HCT116 (cell line): ENCODE measurements at regions of chr5 and their contacts with region 1.

Region 1: DNA sequence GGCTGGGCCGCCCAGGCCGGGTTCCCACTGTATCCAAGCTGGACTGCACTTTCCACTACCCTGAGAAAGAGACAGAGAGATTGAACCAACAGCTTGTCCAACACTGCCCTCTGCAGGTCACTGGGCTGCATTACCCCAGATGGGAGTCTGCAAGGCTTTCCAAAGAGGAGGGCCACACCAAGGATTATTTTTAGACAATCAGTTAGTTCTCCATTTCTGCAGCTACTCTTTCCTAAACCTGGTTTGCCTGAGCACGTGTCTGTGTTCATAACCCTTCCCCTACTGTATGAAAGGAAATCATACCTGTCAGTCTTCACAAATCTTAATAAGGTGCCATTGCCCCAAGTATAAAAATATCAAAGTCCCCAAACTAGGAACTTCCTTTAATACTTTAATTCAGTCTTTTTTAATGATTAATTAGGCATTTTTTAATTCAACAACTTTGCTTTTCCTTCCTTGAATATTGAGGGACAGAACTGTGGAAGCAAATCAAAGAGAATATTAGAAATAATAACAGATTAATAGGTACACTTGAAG is 13.4 kb upstream of the FGF1 start:
- DNase-seq: peak; percentile 66
- ATAC-seq: peak; percentile 98
- H3K4me3 ChIP-seq: no peak overlapping the region
- H3K27ac ChIP-seq: no peak overlapping the region
- H3K4me1 ChIP-seq: peaks cover 11 to 14% of the 10 kb centered on the region in 2 experiments; a peak in 3 of 4 replicates
- H3K27me3 ChIP-seq: no peaks in the 10 kb centered on the region
- CTCF ChIP-seq: peak; percentile 94 to 97 (median 97)
- POLR2A ChIP-seq: no peak
- RAD21 ChIP-seq: peak; percentile 100

Region 2: GRCh38 chr5:142167458-142167857 is 531.8 kb before region 1 on chr5:
- CTCF ChIA-PET with region 1: no interaction called
- POLR2A ChIA-PET with region 1: no interaction called
- RAD21 ChIA-PET with region 1: interaction called in 1 of 2 experiments, 3 read pairs
- intact Hi-C with region 1: loop called (anchors 5 kb)
- DNase-seq: no peak
- ATAC-seq: peak; percentile 71
- H3K4me3 ChIP-seq: no peak overlapping the region
- H3K27ac ChIP-seq: no peak overlapping the region
- H3K4me1 ChIP-seq: peaks cover 3 to 31% of the 10 kb centered on the region in 2 experiments; a peak in 3 of 4 replicates
- H3K27me3 ChIP-seq: no peaks in the 10 kb centered on the region
- CTCF ChIP-seq: peak; percentile 42 to 55 (median 45); a peak in 5 of 6 replicates
- POLR2A ChIP-seq: no peak
- RAD21 ChIP-seq: peak; percentile 73

Region 3: GRCh38 chr5:142587354-142587965 is 111.8 kb before region 1 on chr5:
- CTCF ChIA-PET with region 1: interaction called, 7 read pairs
- POLR2A ChIA-PET with region 1: no interaction called
- RAD21 ChIA-PET with region 1: no interaction called
- intact Hi-C with region 1: loop called (anchors 1 kb)
- DNase-seq: peak; percentile 12
- ATAC-seq: peak; percentile 75
- H3K4me3 ChIP-seq: no peak overlapping the region
- H3K27ac ChIP-seq: no peak overlapping the region
- H3K4me1 ChIP-seq: no peaks in the 10 kb centered on the region
- H3K27me3 ChIP-seq: no peaks in the 10 kb centered on the region
- CTCF ChIP-seq: peak; percentile 54 to 83 (median 67); a peak in 5 of 6 replicates
- POLR2A ChIP-seq: no peak
- RAD21 ChIP-seq: peak; percentile 66

Region 4: GRCh38 chr5:142611154-142611553 is 88.1 kb before region 1 on chr5:
- CTCF ChIA-PET with region 1: interaction called, 14 read pairs
- POLR2A ChIA-PET with region 1: no interaction called
- RAD21 ChIA-PET with region 1: interaction called in 1 of 2 experiments, 4 read pairs
- intact Hi-C with region 1: loop called (anchors 1 kb)
- DNase-seq: peak; percentile 60
- ATAC-seq: peak; percentile 97
- H3K4me3 ChIP-seq: no peak overlapping the region
- H3K27ac ChIP-seq: no peak overlapping the region
- H3K4me1 ChIP-seq: no peaks in the 10 kb centered on the region
- H3K27me3 ChIP-seq: no peaks in the 10 kb centered on the region
- CTCF ChIP-seq: peak; percentile 65 to 91 (median 85)
- POLR2A ChIP-seq: no peak
- RAD21 ChIP-seq: peak; percentile 95

Region 5: DNA sequence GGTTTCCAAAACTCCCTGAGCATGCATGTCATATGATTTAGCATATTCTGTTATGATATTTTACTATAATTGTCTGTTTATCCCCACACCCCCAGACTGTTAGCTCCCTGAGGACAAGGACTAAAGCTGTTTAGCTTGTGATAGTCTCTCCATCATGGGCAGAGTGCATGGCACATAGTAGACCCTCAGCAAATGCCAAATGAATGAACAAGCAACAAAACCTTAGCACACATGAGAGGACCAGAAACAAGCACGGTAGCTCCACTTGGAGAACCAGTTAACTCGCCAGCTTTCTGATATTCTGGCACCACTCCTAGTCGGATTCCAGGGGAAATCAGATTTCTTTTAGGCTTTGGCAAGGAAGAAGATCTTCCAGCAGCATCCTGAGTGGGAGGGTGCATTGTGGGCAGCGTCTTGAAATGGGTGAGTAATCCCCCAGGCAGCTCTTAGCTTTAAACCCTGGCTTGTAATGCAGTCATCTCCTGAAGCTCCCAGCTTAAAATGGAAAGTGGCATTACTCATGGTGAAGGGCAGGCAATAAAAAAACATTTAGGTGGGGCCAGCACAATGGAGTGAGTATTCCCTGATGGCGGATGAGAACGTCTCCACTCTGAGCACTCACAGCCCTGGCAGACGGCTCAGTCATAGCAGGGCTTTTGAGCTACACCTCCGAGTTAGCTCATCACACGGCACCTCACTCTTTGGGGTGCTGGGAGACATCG is 54.5 kb before region 1 on chr5:
- CTCF ChIA-PET with region 1: interaction called, 11 read pairs
- POLR2A ChIA-PET with region 1: no interaction called
- RAD21 ChIA-PET with region 1: no interaction called
- intact Hi-C with region 1: no loop called
- DNase-seq: peak; percentile 96
- ATAC-seq: peak; percentile 91
- H3K4me3 ChIP-seq: peak overlapping the region; percentile 12 to 41
- H3K27ac ChIP-seq: peak overlapping the region; percentile 72
- H3K4me1 ChIP-seq: peaks cover 23 to 34% of the 10 kb centered on the region in 2 experiments
- H3K27me3 ChIP-seq: no peaks in the 10 kb centered on the region
- CTCF ChIP-seq: no peak
- POLR2A ChIP-seq: no peak
- RAD21 ChIP-seq: no peak; the same call in 1 of the 2 replicates